ENCODE measurements at regions of chr19 and their contacts with region 1.

Region 1: GRCh38 chr19:10403137-10404021 is at the start of gene CDC37:
- DNase-seq: peak; percentile 99

Region 2: DNA sequence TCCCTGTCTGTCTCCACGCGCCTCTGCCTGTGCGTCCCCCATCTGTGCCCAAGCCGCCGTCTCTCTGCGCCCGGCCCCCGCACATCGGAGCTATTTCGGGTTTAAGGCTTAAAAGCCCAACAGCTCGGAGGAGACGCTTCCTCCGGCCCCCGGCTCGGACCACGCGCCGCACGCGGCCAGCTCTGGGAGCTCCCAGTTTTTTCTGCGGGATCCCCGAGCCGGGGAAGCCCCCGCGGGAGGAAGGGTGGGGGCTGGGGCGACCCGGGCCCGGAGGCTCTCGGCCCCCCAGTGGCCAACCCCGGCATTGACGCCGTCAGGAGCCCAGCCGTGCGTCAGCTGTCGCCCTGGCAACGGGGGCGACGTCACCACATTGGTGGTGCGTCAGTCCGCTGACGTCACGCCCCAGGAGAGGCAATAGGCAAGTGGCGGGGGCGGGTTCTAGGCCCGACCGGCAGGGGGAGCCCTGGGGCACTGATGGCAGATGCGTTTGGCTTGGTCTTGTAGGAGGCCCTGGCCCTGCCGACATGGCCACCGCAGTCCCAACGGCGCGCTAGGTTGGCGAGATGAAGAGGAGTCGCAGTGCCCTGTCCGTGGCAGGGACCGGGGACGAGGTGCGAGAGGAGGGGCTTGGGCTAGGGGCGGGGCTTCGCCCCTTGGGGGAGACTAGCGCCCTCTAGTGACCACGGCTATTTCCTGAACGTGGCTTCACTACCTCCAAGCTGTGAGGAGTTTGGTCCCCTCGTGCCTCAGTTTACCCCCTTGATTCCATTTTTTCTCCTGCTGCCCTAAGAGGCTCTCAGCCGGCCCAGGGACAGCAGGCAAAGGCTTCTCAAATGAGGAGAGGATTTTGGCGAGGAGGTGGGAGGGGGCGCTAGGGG is 13.2 kb after region 1 on chr19:
- CTCF ChIA-PET with region 1: interaction called, 71 read pairs
- POLR2A ChIA-PET with region 1: interaction called, 17 read pairs
- DNase-seq: peak; percentile 93

Region 3: GRCh38 chr19:10424011-10424637 is 20.7 kb after region 1 on chr19:
- CTCF ChIA-PET with region 1: interaction called, 11 read pairs
- POLR2A ChIA-PET with region 1: interaction called, 4 read pairs
- DNase-seq: peak; percentile 90